Activated T-helper 1 cell treated with anti-CD3 and anti-CD28 coated beads, Interleukin-12 subunit alpha, Interleukin-12 subunit beta, Interleukin-2, Interleukin-4 antibody, amounts not matched to agents 30 ng/mL and 10 ng/mL and 1 ng/mL, durations not matched to agents 14 hours and 24 hours and 36 hours (primary cell): ENCODE measurements at regions of chr1 and their contacts with region 1.

Region 1: GRCh38 chr1:167553136-167554027 is at the start of gene CREG1:
- DNase-seq: peak; percentile 89
- H3K4me3 Mint-ChIP-seq: peak within 1 kb of the TSS; percentile 86
- H3K27ac Mint-ChIP-seq: peak within 1 kb of the TSS; percentile 4
- H3K4me1 Mint-ChIP-seq: peaks cover 40% of the 10 kb centered on the region
- H3K27me3 Mint-ChIP-seq: peaks cover 1% of the 10 kb centered on the region
- total RNA-seq, gene CREG1: 15.3 and 16.8 TPM in 2 replicates

Region 2: GRCh38 chr1:167312871-167313270 is 240.5 kb before region 1 on chr1:
- intact Hi-C with region 1: no loop called
- DNase-seq: no peak
- H3K4me3 Mint-ChIP-seq: no peak overlapping the region
- H3K27ac Mint-ChIP-seq: peak overlapping the region; percentile 36
- H3K4me1 Mint-ChIP-seq: peaks cover 21% of the 10 kb centered on the region
- H3K27me3 Mint-ChIP-seq: no peaks in the 10 kb centered on the region

Region 3: DNA sequence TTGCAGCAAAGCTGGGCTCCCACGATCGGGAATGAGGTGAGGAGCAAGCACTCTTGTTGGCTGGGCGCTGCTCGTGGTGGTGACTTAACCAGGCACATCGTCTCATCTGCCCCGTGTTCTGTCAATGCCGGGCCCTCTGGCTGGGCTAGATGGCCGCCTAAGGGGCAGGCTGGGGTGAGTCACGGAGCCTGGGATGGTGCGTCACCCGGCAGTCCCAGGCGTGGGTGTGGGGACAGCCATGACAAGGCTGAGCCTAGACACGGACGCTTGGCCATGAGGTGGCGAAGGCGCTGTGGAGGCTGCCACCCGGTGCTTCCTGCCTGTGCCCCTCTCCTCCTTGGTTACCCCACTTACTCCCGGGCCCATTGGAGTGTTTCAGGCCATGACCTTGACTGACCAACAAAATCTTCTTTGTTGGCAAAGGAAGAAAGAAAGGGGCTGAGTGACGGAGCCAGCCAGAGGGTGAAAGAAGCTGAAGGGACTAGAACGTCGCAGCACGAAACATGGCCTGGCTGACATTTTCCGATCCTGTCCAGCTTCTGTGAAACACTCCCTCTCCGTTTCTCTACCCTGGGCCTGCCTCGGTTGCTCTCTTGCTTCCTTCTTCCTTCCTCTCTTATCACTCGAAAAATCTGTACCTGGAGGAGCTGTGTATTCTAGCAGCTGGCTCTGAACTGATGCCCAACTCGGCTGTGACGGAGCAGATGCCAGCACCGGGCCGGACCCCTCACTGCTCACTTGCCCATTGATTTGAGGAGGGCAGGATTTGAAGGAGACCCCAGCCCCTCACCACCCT is 35.6 kb before region 1 on chr1:
- intact Hi-C with region 1: no loop called
- DNase-seq: peak; percentile 76
- H3K4me3 Mint-ChIP-seq: peak overlapping the region; percentile 97
- H3K27ac Mint-ChIP-seq: peak overlapping the region; percentile 98
- H3K4me1 Mint-ChIP-seq: peaks cover 59% of the 10 kb centered on the region
- H3K27me3 Mint-ChIP-seq: peaks cover 7% of the 10 kb centered on the region

Region 4: GRCh38 chr1:167542109-167543032 is 11.0 kb before region 1 on chr1:
- intact Hi-C with region 1: loop called (anchors 1 kb)
- DNase-seq: no peak
- H3K4me3 Mint-ChIP-seq: peak overlapping the region; percentile 12
- H3K27ac Mint-ChIP-seq: peak overlapping the region; percentile 35
- H3K4me1 Mint-ChIP-seq: peaks cover 67% of the 10 kb centered on the region
- H3K27me3 Mint-ChIP-seq: no peaks in the 10 kb centered on the region

Region 5: DNA sequence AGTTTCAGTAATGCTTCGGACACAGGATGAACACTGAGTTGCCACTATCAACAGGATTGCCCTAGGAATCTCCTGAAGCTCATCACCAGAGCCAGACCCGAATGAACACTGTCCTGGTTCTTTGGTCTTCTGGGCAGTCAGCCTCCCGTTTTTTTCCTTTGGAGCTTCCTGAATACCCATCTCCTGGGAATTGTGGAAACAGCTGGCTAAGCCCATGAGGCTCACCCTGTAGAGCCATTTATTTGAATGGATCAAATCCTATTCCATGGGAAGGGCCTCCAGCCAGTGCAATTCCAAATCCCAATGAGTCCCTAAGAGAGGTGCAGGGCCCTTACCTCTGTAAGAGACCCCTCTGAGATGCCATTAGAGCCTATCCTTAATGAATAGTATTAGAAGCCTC is 82.6 kb after region 1 on chr1:
- intact Hi-C with region 1: loop called (anchors 2 kb)
- DNase-seq: no peak
- H3K4me3 Mint-ChIP-seq: no peak overlapping the region
- H3K27ac Mint-ChIP-seq: no peak overlapping the region
- H3K4me1 Mint-ChIP-seq: peaks cover 78% of the 10 kb centered on the region
- H3K27me3 Mint-ChIP-seq: no peaks in the 10 kb centered on the region

Region 6: GRCh38 chr1:167687919-167688519 is 134.6 kb after region 1 on chr1:
- intact Hi-C with region 1: loop called (anchors 1 kb)
- DNase-seq: peak; percentile 61
- H3K4me3 Mint-ChIP-seq: no peak overlapping the region
- H3K27ac Mint-ChIP-seq: peak overlapping the region; percentile 44
- H3K4me1 Mint-ChIP-seq: peaks cover 39% of the 10 kb centered on the region
- H3K27me3 Mint-ChIP-seq: no peaks in the 10 kb centered on the region